ENCODE measurements at regions of chr5 and their contacts with region 1.

Region 1: DNA sequence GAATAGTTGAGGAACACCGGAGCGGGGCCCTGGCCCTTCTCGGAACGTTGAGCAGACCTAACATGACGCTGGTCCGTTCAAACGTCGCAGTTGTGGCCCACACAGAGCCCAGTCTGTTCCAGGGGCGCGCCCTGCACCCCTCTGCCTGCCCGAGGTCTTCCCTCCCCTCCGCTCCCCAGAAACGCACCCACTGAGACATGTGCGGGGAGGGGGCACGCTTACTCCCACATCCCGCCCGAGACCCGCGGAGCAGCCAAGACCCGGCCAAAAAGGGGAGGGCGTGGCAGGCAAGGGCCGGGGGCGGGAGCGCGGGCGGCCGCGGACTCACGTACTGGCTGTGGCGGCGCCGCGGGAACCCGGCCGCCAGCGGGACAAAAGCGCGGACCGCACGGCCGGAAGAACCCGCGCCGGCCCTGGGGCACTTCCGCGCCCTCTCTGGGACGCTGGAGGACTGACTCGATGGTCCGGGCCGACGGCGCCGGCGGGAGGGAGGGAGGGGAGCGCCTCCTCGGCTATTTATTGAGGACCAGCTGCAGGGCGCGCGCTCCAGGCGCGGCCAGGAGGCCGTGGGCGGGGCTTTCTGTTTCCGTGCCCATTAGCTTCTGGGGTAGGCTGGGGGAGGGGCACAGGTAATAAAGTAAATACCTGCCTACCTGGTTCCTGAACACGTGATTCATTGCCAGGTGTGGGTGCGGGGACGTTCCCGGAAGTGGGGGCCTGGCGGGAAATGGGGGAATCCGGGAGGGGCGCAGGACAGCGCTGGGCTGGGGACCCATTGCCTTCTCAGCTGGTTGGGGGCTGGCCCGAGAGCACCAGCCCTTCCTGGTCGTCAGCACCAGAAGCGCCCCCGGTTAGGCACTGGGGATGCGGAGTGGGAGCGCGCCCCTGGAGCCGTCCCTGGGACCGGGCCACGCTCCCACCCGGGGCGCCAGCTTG is at the start of gene ZFP62:
- DNase-seq: peak; percentile 91 to 96 (median 96)
- ATAC-seq: peak; percentile 96 to 99 (median 98)
- H3K4me3 ChIP-seq: peak within 1 kb of the TSS; percentile 49 to 100 (median 87)
- H3K27ac ChIP-seq: peak within 1 kb of the TSS; percentile 72 to 98 (median 92)
- H3K4me1 ChIP-seq: peaks cover 0 to 23% (median 12%) of the 10 kb centered on the region in 12 donors
- H3K27me3 ChIP-seq: peaks cover 0 to under 1% (median 0%) of the 10 kb centered on the region in 9 donors
- CTCF ChIP-seq: peak in 4 of 12 donors; percentile 5 to 20 (median 12)
- POLR2A ChIP-seq: peak in 1 of 2 donors; percentile 63
- total RNA-seq, gene ZFP62: 9.4 to 18.6 (median 13.8) TPM

Region 2: DNA sequence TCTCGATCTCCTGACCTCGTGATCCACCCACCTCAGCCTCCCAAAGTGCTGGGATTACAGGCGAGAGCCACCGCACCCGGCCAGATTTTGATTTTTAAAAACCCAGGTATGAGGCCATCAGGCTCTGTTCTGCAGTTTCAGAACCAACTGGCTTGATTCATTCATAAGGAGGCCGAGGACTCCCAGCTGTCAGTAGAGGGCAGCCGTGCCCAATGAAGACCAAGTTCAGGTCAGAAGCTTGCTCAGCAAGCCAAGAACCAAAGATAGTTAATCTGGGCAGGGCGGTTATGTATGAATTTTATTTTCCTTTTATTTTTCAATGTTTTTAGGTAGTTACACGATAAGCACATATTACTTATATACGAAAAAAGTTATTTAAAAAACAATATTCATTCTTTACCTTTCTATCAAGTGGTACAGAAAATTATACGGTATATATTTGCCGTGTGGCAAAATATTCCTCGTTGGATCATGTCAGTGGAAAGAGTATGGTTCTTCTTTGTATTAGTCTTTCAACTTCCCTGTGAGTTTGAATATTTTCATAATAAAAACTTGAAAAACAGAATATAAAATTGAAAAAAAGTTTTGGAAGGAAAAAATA is 76.6 kb before region 1 on chr5:
- intact Hi-C with region 1: loop called in 6 of 10 experiments (anchors 5 kb)
- DNase-seq: peak; percentile 83 to 89 (median 84)
- ATAC-seq: peak; percentile 63 to 78 (median 74)
- H3K4me3 ChIP-seq: no peak overlapping the region
- H3K27ac ChIP-seq: peak overlapping the region in 7 of 12 donors; percentile 41 to 81 (median 73)
- H3K4me1 ChIP-seq: peaks cover 4 to 50% (median 37%) of the 10 kb centered on the region in 12 donors
- H3K27me3 ChIP-seq: no peaks in the 10 kb centered on the region
- CTCF ChIP-seq: peak; percentile 59 to 90 (median 78)
- POLR2A ChIP-seq: no peak

Region 3: GRCh38 chr5:180810210-180810958 is 50.8 kb before region 1 on chr5:
- intact Hi-C with region 1: loop called in 3 of 10 experiments (anchors 2 to 5 kb)
- DNase-seq: peak; percentile 98 to 99 (median 98)
- ATAC-seq: peak; percentile 95 to 97 (median 97)
- H3K4me3 ChIP-seq: peak overlapping the region; percentile 40 to 83 (median 71)
- H3K27ac ChIP-seq: peak overlapping the region; percentile 96 to 100 (median 99)
- H3K4me1 ChIP-seq: peaks cover 6 to 66% (median 47%) of the 10 kb centered on the region in 12 donors
- H3K27me3 ChIP-seq: no peaks in the 10 kb centered on the region
- CTCF ChIP-seq: no peak
- POLR2A ChIP-seq: peak in 1 of 2 donors; percentile 79

Region 4: DNA sequence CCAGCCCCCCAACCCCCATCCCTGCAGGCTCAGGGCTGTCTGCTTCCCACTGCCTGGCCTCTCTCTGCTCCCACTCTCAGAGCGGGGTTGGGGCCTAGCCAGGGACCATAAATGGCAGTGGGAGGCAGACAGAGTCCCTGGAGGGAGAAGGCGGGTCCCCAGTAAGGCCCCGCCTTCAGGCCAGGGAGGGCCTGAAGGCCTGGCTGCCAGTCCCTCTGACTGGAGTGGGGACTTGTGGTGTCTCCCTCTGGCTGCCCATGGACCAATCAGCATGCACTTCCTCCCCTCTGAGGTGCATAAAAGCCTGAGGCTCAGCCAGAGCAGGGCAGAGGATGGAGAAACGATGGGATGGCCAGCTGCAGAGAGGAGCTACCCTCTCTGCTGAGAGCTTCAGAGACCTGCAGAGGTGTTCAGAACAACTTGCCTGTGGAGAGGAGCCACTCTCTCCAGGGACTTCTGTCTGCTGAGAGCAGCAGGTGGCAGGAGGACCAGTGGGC is 176.3 kb after region 1 on chr5:
- intact Hi-C with region 1: loop called in 3 of 10 experiments (anchors 5 to 10 kb)
- DNase-seq: peak in 1 of 5 donors; percentile 50
- ATAC-seq: peak; percentile 59 to 82 (median 72)
- H3K4me3 ChIP-seq: no peak overlapping the region
- H3K27ac ChIP-seq: peak overlapping the region in 3 of 12 donors; percentile 3 to 38 (median 22)
- H3K4me1 ChIP-seq: peaks cover 0 to 13% (median 1%) of the 10 kb centered on the region in 12 donors
- H3K27me3 ChIP-seq: peaks cover 0 to 11% (median 0%) of the 10 kb centered on the region in 9 donors
- CTCF ChIP-seq: no peak
- POLR2A ChIP-seq: peak in 1 of 2 donors; percentile 93

Region 5: GRCh38 chr5:181159286-181159829 is 298.2 kb after region 1 on chr5:
- intact Hi-C with region 1: loop called in 4 of 10 experiments (anchors 10 kb)
- DNase-seq: peak; percentile 79 to 91 (median 81)
- ATAC-seq: peak; percentile 72 to 94 (median 92)
- H3K4me3 ChIP-seq: no peak overlapping the region
- H3K27ac ChIP-seq: peak overlapping the region in 1 of 12 donors; percentile 81
- H3K4me1 ChIP-seq: peaks cover 0 to 14% (median 2%) of the 10 kb centered on the region in 12 donors
- H3K27me3 ChIP-seq: peaks cover 0 to 14% (median 9%) of the 10 kb centered on the region in 9 donors
- CTCF ChIP-seq: peak; percentile 83 to 91 (median 85)
- POLR2A ChIP-seq: no peak

Region 6: GRCh38 chr5:181181650-181182565 is 320.8 kb after region 1 on chr5:
- intact Hi-C with region 1: loop called in 2 of 10 experiments (anchors 10 kb)
- DNase-seq: peak; percentile 68 to 79 (median 71)
- ATAC-seq: peak; percentile 72 to 87 (median 86)
- H3K4me3 ChIP-seq: no peak overlapping the region
- H3K27ac ChIP-seq: no peak overlapping the region
- H3K4me1 ChIP-seq: peaks cover 0 to 24% (median 5%) of the 10 kb centered on the region in 12 donors
- H3K27me3 ChIP-seq: peaks cover 0 to 3% (median 0%) of the 10 kb centered on the region in 9 donors
- CTCF ChIP-seq: peak; percentile 67 to 86 (median 80)
- POLR2A ChIP-seq: no peak

Measured in heart left ventricle (tissue), 16 donors.